Heart right ventricle (tissue), 16 donors: ENCODE measurements at regions of chr2 and their contacts with region 1.

Region 1: DNA sequence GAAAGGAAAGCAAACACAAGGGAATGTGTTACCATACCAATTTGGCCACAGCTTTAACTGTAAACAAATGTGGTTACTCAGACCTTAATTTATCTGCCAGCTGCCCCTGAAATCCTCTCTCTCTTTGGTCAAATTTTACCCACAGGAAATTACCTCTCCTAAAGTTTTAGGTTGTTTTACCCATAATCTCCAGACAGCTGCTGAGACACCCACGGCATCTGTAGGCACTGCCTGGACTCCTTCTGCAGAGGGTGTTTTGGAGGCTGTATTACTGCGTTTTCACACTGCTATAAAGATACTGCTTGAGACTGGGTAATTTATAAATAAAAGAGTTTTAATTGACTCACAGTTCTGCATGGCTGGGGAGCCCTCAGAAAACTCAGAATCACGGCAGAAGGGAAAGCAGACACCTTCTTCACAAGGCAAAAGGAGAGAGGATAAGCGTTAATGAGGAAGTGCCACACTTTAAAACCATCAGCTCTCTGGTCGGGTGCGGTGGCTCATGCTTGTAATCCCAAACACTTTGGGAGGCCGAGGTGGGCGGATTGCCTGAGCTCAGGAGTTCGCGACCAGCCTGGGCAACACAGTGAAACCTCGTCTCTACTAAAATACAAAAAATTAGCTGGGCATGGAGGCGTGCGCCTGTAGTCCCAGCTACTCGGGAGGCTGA is 677.5 kb upstream of the FSHR start:
- DNase-seq: no peak
- ATAC-seq: peak in 1 of 8 donors; percentile 19
- H3K4me3 ChIP-seq: no peak overlapping the region
- H3K27ac ChIP-seq: peak overlapping the region in 4 of 10 donors; percentile 36 to 64 (median 43)
- H3K4me1 ChIP-seq: peaks cover 0 to under 1% (median 0%) of the 10 kb centered on the region in 9 donors
- H3K27me3 ChIP-seq: no peaks in the 10 kb centered on the region
- CTCF ChIP-seq: no peak

Region 2: GRCh38 chr2:49812730-49813129 is 19.1 kb before region 1 on chr2:
- intact Hi-C with region 1: loop called in 2 of 10 experiments (anchors 1 to 2 kb)
- DNase-seq: peak in 1 of 2 donors; percentile 13
- ATAC-seq: peak; percentile 81 to 99 (median 97)
- H3K4me3 ChIP-seq: no peak overlapping the region
- H3K27ac ChIP-seq: peak overlapping the region; percentile 9 to 83 (median 68)
- H3K4me1 ChIP-seq: peaks cover 0 to 28% (median 3%) of the 10 kb centered on the region in 9 donors
- H3K27me3 ChIP-seq: no peaks in the 10 kb centered on the region
- CTCF ChIP-seq: no peak